Activated naive CD8-positive, alpha-beta T cell treated with anti-CD3 and anti-CD28 coated beads, Interleukin-2, amount 10 ng/mL, durations not matched to agents 7 days and 5 days (primary cell): ENCODE measurements at regions of chr14 and their contacts with region 1.

Region 1: DNA sequence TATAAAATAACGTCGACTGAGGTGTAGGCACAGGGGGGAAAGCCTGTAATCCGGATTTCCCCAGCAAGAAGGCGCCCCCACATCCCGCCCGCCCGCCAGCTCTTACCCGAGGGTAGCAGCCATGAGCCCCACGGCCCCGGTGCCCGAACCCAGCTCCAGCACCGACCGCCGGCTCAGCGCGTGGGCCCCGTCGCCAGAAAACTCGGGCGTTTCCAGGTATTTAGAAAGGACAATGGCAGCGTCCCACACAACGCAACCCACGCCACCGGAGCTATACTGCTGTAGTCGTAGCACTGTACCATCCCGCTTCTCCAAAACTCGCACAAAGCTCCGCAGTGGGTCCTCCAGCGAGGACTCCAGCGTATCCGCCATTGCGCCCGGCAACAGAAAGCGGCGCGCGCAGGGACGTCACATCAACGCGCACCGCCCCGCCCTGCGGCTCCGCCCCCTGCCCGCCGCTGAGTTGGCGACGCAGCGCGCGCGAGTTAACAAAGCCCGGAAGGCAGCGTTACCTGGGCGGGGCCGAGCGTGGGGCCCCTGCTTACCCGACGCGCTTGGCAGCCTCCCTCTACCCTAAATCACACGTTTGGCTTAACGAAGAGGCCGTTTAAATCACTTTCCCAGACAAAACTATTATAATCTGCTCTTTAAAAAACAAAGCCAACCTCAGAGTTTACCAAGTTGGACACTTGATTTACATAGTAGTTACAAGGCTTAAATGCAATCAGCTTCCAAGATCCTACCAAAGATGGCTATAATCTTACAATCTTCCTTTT is at the start of gene VCPKMT:
- DNase-seq: peak; percentile 99
- ATAC-seq: peak; percentile 98
- H3K4me3 Mint-ChIP-seq: peak within 1 kb of the TSS; percentile 97
- H3K27ac Mint-ChIP-seq: peak within 1 kb of the TSS; percentile 99
- H3K4me1 Mint-ChIP-seq: peaks cover 25% of the 10 kb centered on the region
- H3K27me3 Mint-ChIP-seq: no peaks in the 10 kb centered on the region
- total RNA-seq, gene VCPKMT: 12.9 to 14.9 TPM

Region 2: GRCh38 chr14:49852301-49853157 is 263.8 kb before region 1 on chr14 and contains the start of gene NEMF:
- POLR2A ChIA-PET with region 1: interaction called, 18 read pairs
- DNase-seq: peak; percentile 81
- ATAC-seq: peak; percentile 80
- H3K4me3 Mint-ChIP-seq: peak within 1 kb of the TSS; percentile 99
- H3K27ac Mint-ChIP-seq: peak within 1 kb of the TSS; percentile 99
- H3K4me1 Mint-ChIP-seq: peaks cover 29% of the 10 kb centered on the region
- H3K27me3 Mint-ChIP-seq: no peaks in the 10 kb centered on the region
- total RNA-seq, gene NEMF: 90.1 to 91.1 TPM

Region 3: GRCh38 chr14:50070840-50071548 is 45.4 kb before region 1 on chr14:
- POLR2A ChIA-PET with region 1: no interaction called
- DNase-seq: no peak
- ATAC-seq: no peak
- H3K4me3 Mint-ChIP-seq: no peak overlapping the region
- H3K27ac Mint-ChIP-seq: no peak overlapping the region
- H3K4me1 Mint-ChIP-seq: peaks cover 36% of the 10 kb centered on the region
- H3K27me3 Mint-ChIP-seq: no peaks in the 10 kb centered on the region